WTC11 (cell line): ENCODE measurements at regions of chr18 and their contacts with region 1.

Region 1: DNA sequence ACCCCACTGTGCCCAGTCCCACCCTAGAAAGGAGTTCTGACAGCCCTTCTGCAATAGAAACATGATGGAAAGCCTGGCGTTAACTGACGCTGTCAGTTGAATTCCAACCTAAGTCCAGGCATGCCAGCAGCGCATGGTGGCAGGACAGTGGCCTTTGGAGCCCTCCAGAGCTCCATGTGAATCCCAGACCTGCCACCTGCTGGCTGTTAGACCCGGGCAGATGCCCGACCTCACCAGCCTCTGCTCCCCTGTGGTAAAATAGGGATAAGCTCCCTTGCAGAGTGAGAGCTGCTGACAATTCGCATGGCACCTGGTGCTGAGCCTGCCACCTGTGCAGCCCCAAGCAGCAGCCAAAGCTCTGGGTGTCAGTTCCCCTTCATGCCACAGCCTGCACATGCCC is 138.6 kb downstream of the LOXHD1 start:
- DNase-seq: peak; percentile 38
- ATAC-seq: peak; percentile 68
- H3K4me3 Mint-ChIP-seq: no peak overlapping the region
- H3K27ac Mint-ChIP-seq: no peak overlapping the region
- H3K4me1 Mint-ChIP-seq: no peaks in the 10 kb centered on the region
- H3K27me3 Mint-ChIP-seq: peaks cover 2% of the 10 kb centered on the region
- CTCF ChIP-seq: no peak

Region 2: DNA sequence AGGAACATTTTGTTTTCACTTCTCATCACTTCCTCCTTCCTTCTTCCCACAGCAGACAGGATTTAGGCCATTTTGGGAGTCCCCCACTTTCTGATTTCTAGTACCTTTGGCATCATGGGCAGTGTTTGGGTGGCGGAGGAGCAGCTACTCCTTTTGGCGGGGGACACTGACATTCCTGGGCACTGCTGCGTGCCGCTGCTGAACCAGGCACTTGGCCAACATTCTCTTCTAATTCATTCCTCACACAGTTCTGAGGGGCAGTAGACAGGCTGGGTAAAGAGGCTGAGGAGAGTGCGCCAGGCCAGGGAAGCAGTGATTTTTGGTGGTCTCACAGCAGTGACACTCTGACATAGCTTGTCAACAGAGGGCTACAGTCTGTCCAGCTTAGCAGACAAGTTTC is 131.7 kb before region 1 on chr18:
- CTCF ChIA-PET with region 1: interaction called, 14 read pairs
- POLR2A ChIA-PET with region 1: no interaction called
- DNase-seq: no peak
- ATAC-seq: no peak
- H3K4me3 Mint-ChIP-seq: no peak overlapping the region
- H3K27ac Mint-ChIP-seq: no peak overlapping the region
- H3K4me1 Mint-ChIP-seq: peaks cover 6% of the 10 kb centered on the region; the same call in 1 of the 2 replicates
- H3K27me3 Mint-ChIP-seq: no peaks in the 10 kb centered on the region
- CTCF ChIP-seq: no peak

Region 3: GRCh38 chr18:46445914-46446313 is 72.5 kb before region 1 on chr18:
- CTCF ChIA-PET with region 1: interaction called, 11 read pairs
- POLR2A ChIA-PET with region 1: no interaction called
- DNase-seq: no peak
- ATAC-seq: no peak
- H3K4me3 Mint-ChIP-seq: no peak overlapping the region
- H3K27ac Mint-ChIP-seq: no peak overlapping the region
- H3K4me1 Mint-ChIP-seq: peaks cover 33% of the 10 kb centered on the region
- H3K27me3 Mint-ChIP-seq: peaks cover 12% of the 10 kb centered on the region
- CTCF ChIP-seq: no peak